Endothelial cell of umbilical vein (primary cell): ENCODE measurements at regions of chr4 and their contacts with region 1.

Region 1: GRCh38 chr4:148441986-148442831 is at the start of gene NR3C2:
- DNase-seq: peak; percentile 99
- H3K4me3 ChIP-seq: peak within 1 kb of the TSS; percentile 88 to 98 (median 94)
- H3K27ac ChIP-seq: peak within 1 kb of the TSS; percentile 63
- H3K4me1 ChIP-seq: peaks cover 23% of the 10 kb centered on the region
- H3K27me3 ChIP-seq: no peaks in the 10 kb centered on the region
- CTCF ChIP-seq: no peak
- POLR2A ChIP-seq: peak; percentile 98
- total RNA-seq, gene NR3C2: 15.9 and 16.4 TPM in 2 replicates

Region 2: DNA sequence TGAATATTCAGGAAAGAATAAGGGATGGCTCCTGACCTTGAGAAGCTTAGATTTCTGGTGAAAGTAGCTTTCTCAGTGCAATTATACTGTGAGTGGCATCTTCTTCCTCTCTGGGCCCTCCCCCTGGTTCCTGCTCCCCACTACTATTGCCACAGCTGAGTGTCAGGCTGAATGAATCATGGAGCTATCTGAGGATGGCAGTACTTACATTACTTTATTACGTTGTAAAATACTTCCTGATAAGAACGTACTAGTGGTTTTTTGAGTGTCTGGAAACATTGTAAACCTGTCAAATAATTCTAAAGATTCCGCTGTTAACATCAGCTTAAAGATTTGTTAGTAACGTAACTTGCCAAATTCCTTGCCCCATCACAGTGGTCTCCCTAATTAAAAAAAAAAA is 674.1 kb before region 1 on chr4:
- CTCF ChIA-PET with region 1: no interaction called
- POLR2A ChIA-PET with region 1: no interaction called
- dilution Hi-C with region 1: no loop called
- intact Hi-C with region 1: loop called (anchors 10 kb)
- DNase-seq: peak; percentile 95
- H3K4me3 ChIP-seq: no peak overlapping the region
- H3K27ac ChIP-seq: peak overlapping the region; percentile 62
- H3K4me1 ChIP-seq: peaks cover 51% of the 10 kb centered on the region
- H3K27me3 ChIP-seq: no peaks in the 10 kb centered on the region
- CTCF ChIP-seq: no peak
- POLR2A ChIP-seq: no peak

Region 3: DNA sequence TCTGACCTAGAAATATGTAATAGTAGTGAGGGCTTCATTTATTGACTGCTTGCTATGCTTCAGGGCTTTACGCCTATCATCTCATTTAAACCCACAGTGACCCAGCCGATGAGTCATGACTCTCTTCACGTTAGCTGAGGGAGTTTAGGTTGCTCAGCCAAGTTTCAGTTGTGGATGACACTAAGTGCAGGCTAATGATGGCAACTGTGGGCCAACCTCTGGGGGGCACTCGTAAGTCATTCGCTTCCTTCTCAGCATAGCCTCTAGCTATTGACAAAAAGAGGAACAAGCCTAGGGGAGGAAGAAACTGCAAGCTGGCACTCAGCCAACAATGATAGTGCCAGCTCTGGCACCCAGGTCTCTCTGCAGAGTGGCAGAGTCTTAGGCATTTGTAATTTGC is 385.3 kb before region 1 on chr4:
- CTCF ChIA-PET with region 1: no interaction called
- POLR2A ChIA-PET with region 1: interaction called, 3 read pairs
- dilution Hi-C with region 1: no loop called
- intact Hi-C with region 1: loop called (anchors 5 kb)
- DNase-seq: peak; percentile 25
- H3K4me3 ChIP-seq: no peak overlapping the region
- H3K27ac ChIP-seq: no peak overlapping the region
- H3K4me1 ChIP-seq: no peaks in the 10 kb centered on the region
- H3K27me3 ChIP-seq: no peaks in the 10 kb centered on the region
- CTCF ChIP-seq: no peak
- POLR2A ChIP-seq: no peak

Region 4: DNA sequence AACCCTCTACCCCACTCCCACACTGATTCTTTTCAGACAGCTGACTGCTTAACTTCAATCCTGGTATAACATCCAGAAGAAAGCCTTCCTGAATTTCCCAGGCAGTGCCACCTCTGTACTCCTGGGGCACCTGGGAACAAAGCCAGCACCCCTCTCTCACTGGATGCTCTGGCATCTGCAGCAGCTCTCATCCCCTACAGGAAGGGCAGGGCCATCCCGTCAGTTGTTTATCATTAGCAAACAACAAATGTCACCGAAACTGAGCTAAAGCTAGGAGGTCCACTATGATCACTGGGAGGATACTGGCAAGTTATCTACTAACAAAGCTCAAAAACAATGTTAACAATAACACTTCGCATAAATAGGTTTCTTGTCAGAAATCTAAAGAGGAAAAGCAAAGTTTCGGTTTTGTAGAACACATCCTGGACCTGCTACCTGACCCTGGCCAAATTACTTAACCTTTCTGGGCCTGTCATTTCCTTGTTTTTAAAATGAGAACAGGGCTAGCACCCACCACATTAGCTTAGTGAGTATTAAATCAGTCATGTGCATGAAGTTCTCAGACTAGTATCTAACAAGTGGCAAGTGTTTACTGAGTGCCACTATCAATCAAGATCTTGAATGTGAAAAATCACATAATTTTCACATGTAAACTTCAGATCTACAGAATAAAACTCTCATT is 86.6 kb before region 1 on chr4:
- CTCF ChIA-PET with region 1: interaction called, 4 read pairs
- POLR2A ChIA-PET with region 1: no interaction called
- dilution Hi-C with region 1: no loop called
- intact Hi-C with region 1: loop called (anchors 2 kb)
- DNase-seq: peak; percentile 93
- H3K4me3 ChIP-seq: peak overlapping the region in 2 of 3 experiments; percentile 19 to 23
- H3K27ac ChIP-seq: peak overlapping the region; percentile 81
- H3K4me1 ChIP-seq: peaks cover 42% of the 10 kb centered on the region
- H3K27me3 ChIP-seq: no peaks in the 10 kb centered on the region
- CTCF ChIP-seq: no peak
- POLR2A ChIP-seq: no peak

Region 5: GRCh38 chr4:148398988-148399387 is 43.2 kb before region 1 on chr4:
- CTCF ChIA-PET with region 1: no interaction called
- POLR2A ChIA-PET with region 1: no interaction called
- dilution Hi-C with region 1: no loop called
- intact Hi-C with region 1: no loop called
- DNase-seq: no peak
- H3K4me3 ChIP-seq: no peak overlapping the region
- H3K27ac ChIP-seq: no peak overlapping the region
- H3K4me1 ChIP-seq: no peaks in the 10 kb centered on the region
- H3K27me3 ChIP-seq: no peaks in the 10 kb centered on the region
- CTCF ChIP-seq: no peak
- POLR2A ChIP-seq: no peak

Region 6: GRCh38 chr4:148651991-148652390 is 209.8 kb after region 1 on chr4:
- CTCF ChIA-PET with region 1: no interaction called
- POLR2A ChIA-PET with region 1: no interaction called
- dilution Hi-C with region 1: no loop called
- intact Hi-C with region 1: loop called (anchors 5 kb)
- DNase-seq: no peak
- H3K4me3 ChIP-seq: no peak overlapping the region
- H3K27ac ChIP-seq: no peak overlapping the region
- H3K4me1 ChIP-seq: no peaks in the 10 kb centered on the region
- H3K27me3 ChIP-seq: no peaks in the 10 kb centered on the region
- CTCF ChIP-seq: no peak
- POLR2A ChIP-seq: no peak

Region 7: DNA sequence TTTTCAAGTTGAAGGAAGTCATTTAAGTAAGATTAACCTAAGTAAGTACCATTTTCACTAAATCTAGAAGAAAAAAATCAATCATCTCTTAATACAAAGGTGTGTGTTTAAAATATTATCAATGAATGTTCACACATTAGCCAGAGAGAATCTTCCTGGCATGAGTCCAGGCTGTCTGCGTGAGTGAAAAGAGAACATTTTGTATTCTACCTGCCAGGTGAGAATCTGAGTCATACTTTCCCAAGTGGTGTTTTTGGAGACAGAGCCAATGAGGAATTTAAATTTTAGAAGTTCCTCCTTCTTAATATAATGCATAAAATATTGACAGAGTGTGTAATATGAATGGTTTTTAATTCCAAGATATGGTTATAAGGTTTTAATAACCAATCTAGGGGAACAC is 371.8 kb after region 1 on chr4:
- CTCF ChIA-PET with region 1: no interaction called
- POLR2A ChIA-PET with region 1: no interaction called
- dilution Hi-C with region 1: no loop called
- intact Hi-C with region 1: no loop called
- DNase-seq: no peak
- H3K4me3 ChIP-seq: no peak overlapping the region
- H3K27ac ChIP-seq: no peak overlapping the region
- H3K4me1 ChIP-seq: no peaks in the 10 kb centered on the region
- H3K27me3 ChIP-seq: no peaks in the 10 kb centered on the region
- CTCF ChIP-seq: no peak
- POLR2A ChIP-seq: no peak

Region 8: DNA sequence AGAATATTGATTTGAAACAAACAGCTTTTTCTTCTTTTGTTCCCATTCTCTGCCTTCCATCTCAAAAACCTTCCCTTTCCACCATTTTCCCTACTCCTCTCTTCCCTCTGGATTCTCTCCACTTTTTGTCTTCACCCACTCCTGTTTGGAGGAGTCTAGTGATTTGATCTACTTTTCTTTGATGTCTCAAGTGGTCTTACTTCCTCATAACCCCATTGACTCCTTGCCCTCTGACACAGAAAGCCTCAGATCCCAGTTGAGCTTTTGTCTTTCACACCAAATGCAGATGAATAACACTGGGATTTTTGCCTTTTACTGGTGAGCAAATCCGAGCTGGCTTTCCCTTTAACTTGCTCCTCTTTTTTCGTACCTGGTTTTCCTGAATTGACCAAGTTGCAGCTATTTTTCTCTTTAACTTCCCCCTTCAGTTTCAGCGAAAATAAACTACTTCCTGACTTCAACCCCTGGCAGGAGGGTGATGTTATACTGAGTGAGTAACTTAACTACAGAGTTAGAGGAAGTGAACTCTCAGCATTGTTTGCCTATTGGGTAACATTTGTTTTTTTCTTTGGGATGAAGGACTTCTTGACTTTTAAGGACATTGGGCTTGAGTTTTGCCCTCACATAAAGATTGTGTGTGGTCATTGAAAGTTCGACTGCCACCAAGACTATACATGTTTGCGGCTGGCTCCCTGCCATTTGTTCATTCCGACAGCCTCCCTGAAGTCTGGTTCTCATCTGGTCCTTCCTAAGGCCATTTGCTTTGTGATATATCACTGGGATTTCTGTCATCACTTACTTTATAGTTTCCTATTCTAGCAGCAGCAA is 392.8 kb after region 1 on chr4:
- CTCF ChIA-PET with region 1: no interaction called
- POLR2A ChIA-PET with region 1: no interaction called
- dilution Hi-C with region 1: no loop called
- intact Hi-C with region 1: loop called (anchors 1 kb)
- DNase-seq: peak; percentile 89
- H3K4me3 ChIP-seq: no peak overlapping the region
- H3K27ac ChIP-seq: peak overlapping the region; percentile 94
- H3K4me1 ChIP-seq: peaks cover 43% of the 10 kb centered on the region
- H3K27me3 ChIP-seq: no peaks in the 10 kb centered on the region
- CTCF ChIP-seq: no peak
- POLR2A ChIP-seq: no peak

Region 9: DNA sequence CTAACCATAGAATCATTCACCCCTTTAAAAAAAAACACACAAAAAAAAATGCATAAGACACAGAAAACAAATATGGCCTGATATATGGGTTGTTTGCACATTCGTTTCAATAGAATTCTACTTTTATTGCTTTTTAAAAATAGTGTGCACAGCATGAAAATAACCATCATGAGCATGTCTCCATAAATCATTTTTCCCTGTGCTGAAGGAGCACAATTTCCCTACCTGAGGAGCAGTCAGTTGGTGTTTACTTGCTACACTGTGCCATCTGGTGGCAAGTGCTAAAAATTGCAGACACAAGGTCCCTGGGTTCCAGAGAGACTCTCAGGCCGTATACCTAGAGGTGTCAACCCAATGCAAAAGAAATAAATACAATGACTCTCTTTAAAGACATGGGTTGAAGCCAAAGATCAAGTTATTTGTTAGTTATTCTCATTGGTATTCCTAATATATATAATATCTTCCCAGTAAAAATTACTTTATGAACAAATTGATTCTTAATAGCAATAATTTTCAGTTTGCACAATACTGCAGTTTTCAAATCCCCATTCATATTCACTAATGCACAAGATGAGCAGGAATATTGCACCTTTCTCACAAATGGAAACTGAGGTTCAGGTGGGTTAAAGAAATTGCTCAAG is 822.0 kb after region 1 on chr4:
- CTCF ChIA-PET with region 1: interaction called, 4 read pairs
- POLR2A ChIA-PET with region 1: interaction called, 3 read pairs
- dilution Hi-C with region 1: no loop called
- intact Hi-C with region 1: loop called (anchors 1 kb)
- DNase-seq: peak; percentile 55
- H3K4me3 ChIP-seq: no peak overlapping the region
- H3K27ac ChIP-seq: no peak overlapping the region
- H3K4me1 ChIP-seq: peaks cover 3% of the 10 kb centered on the region
- H3K27me3 ChIP-seq: no peaks in the 10 kb centered on the region
- CTCF ChIP-seq: peak; percentile 48 to 55
- POLR2A ChIP-seq: no peak